Activated naive CD4-positive, alpha-beta T cell treated with anti-CD3 and anti-CD28 coated beads, Interleukin-2, amount 10 ng/mL, durations not matched to agents 7 days and 5 days (primary cell): ENCODE measurements at regions of chr4 and their contacts with region 1.

Region 1: DNA sequence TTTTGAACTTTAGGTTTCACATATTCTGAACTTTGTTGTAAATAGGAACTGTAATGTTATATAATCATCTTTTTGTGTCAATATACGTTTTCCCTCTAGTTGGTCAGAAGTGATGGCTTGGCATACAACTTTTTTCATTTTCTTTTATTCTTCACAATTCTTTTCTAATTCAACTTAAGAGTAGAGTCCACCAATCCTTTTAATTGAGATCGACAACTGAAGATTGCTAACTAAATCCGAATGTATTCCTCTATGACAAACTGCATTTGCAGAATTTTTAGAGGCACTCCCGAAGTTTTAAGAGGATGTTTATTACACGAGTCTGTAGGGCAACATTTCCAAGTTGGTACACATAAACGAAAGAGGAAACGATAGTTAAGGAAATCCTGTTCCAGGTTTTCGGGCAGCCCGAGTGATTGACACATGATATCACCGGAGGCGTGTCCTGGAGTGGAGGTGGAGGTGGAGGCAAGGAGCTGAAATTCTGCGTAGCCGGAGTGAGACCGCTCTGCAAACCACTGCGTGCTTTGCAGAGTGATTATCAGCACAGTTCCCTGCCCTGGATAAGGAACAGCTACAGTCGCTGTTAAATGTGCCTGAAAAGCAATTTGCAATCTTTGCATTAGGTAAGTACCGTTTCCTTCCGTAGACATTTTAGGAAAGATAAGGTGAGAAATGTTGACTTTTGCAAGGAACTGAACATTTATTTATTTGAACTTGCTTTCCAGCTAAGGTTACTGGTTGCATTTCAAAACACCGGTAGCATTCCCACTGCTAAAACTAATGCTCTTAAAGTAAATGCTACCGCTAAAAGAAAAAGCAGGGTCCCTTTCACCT is at the start of gene SPRY1:
- DNase-seq: peak; percentile 85
- H3K4me3 Mint-ChIP-seq: peak within 1 kb of the TSS; percentile 81
- H3K27ac Mint-ChIP-seq: peak within 1 kb of the TSS; percentile 66
- H3K4me1 Mint-ChIP-seq: peaks cover 36% of the 10 kb centered on the region
- H3K27me3 Mint-ChIP-seq: peaks cover 48% of the 10 kb centered on the region

Region 2: DNA sequence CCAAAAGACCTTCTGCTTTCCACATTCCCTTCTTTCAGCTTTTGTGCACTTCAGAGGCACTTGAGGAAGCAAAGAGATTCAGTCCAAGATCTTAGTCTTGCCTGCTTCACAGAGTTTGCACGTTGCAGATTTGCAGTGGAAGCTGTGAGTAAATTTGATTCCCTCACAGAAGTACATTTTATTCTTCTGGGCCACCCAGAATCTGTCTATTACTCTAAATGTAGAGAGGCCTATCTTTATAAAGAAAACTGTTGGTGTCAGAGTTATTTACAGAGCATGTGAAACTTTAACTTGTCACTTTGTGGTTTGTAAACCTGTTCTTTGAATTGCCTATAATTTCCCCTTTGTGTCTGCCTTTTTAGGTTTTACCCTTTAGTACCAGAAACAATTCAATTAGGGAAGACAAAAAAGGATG is 15.6 kb after region 1 on chr4:
- CTCF ChIA-PET with region 1: interaction called, 24 read pairs
- DNase-seq: no peak
- H3K4me3 Mint-ChIP-seq: no peak overlapping the region
- H3K27ac Mint-ChIP-seq: peak overlapping the region; percentile 68
- H3K4me1 Mint-ChIP-seq: peaks cover 45% of the 10 kb centered on the region
- H3K27me3 Mint-ChIP-seq: no peaks in the 10 kb centered on the region

Region 3: GRCh38 chr4:123418351-123418931 is 21.9 kb after region 1 on chr4:
- CTCF ChIA-PET with region 1: interaction called, 17 read pairs
- DNase-seq: no peak
- H3K4me3 Mint-ChIP-seq: no peak overlapping the region
- H3K27ac Mint-ChIP-seq: peak overlapping the region; percentile 76
- H3K4me1 Mint-ChIP-seq: peaks cover 72% of the 10 kb centered on the region
- H3K27me3 Mint-ChIP-seq: no peaks in the 10 kb centered on the region